Activated CD4-positive, alpha-beta T cell treated with anti-CD3 and anti-CD28 coated beads for 36 hours (primary cell): ENCODE measurements at regions of chr18 and their contacts with region 1.

Region 1: GRCh38 chr18:59837586-59837985 is 62.2 kb upstream of the PMAIP1 start:
- DNase-seq: peak; percentile 56
- ATAC-seq: peak; percentile 60
- H3K4me3 Mint-ChIP-seq: no peak overlapping the region
- H3K27ac Mint-ChIP-seq: no peak overlapping the region
- H3K4me1 Mint-ChIP-seq: peaks cover 10% of the 10 kb centered on the region
- H3K27me3 Mint-ChIP-seq: peaks cover 5% of the 10 kb centered on the region

Region 2: GRCh38 chr18:58231930-58232329 is 1605.7 kb before region 1 on chr18:
- CTCF ChIA-PET with region 1: no interaction called
- POLR2A ChIA-PET with region 1: no interaction called
- intact Hi-C with region 1: no loop called
- DNase-seq: no peak
- ATAC-seq: no peak
- H3K4me3 Mint-ChIP-seq: no peak overlapping the region
- H3K27ac Mint-ChIP-seq: no peak overlapping the region
- H3K4me1 Mint-ChIP-seq: no peaks in the 10 kb centered on the region
- H3K27me3 Mint-ChIP-seq: no peaks in the 10 kb centered on the region

Region 3: DNA sequence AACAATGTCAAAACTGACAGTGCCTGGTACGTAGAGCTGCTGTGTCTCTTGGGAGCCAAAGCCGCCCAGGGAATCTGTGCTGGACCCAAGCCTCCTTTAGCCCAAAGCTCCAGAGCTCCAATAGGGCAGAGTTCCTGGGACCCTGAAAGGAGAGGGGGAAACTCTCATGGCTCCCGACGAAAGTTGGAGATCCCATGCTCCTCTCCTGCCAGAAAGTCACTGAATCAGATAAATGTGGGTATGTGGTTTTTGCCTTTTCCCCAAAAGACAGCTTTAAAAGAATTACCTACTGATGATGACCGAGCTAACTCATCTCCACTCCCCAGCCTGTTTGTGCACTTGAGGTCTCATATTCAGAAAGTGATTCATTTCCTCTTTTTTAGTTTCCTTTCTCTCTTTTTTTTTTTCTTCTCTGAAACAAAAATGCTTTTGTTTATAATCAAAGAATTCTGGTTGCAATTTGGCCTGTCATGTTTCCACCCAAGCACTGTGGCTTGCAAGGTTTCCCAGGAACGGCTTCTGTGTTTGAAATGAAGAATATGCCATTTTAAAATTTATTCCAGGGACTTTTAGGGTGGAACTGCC is 48.1 kb after region 1 on chr18:
- CTCF ChIA-PET with region 1: interaction called, 3 read pairs
- POLR2A ChIA-PET with region 1: interaction called, 5 read pairs
- intact Hi-C with region 1: loop called in 1 of 2 experiments (anchors 5 kb)
- DNase-seq: peak; percentile 56
- ATAC-seq: peak; percentile 79
- H3K4me3 Mint-ChIP-seq: peak overlapping the region; percentile 26
- H3K27ac Mint-ChIP-seq: peak overlapping the region; percentile 74
- H3K4me1 Mint-ChIP-seq: peaks cover 39% of the 10 kb centered on the region
- H3K27me3 Mint-ChIP-seq: no peaks in the 10 kb centered on the region

Region 4: DNA sequence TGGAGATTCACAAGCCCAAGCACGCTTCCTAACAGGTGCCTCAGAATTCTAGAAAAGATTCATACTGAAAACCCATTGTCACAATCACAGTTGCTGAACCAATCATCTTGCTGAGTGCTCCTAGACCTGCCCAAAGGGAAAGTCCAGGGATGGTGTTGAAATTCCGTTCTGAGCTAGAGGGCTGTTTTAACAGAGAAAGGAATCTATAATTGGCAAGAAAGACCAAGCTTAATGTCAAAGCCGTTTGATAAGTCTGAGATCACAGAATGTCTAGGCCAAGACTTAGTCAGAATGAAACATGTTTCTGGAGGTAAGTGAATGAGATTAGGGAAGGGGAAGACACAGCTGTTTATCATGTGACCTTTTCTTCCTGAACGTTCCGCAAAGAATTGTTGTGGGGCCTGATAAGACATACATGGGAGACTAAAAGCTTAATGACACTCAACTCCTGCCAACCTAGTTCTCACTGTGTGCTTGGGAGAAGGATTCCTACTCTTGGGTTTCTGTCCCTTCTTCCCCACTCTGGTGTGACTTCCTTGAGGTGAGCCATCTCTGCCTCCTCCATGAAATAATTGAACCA is 89.8 kb after region 1 on chr18:
- CTCF ChIA-PET with region 1: interaction called, 3 read pairs
- POLR2A ChIA-PET with region 1: no interaction called
- intact Hi-C with region 1: loop called in 1 of 2 experiments (anchors 1 kb)
- DNase-seq: peak; percentile 70
- ATAC-seq: peak; percentile 90
- H3K4me3 Mint-ChIP-seq: peak overlapping the region; percentile 47
- H3K27ac Mint-ChIP-seq: peak overlapping the region; percentile 93
- H3K4me1 Mint-ChIP-seq: peaks cover 37% of the 10 kb centered on the region
- H3K27me3 Mint-ChIP-seq: no peaks in the 10 kb centered on the region

Region 5: GRCh38 chr18:59950215-59950944 is 112.8 kb after region 1 on chr18:
- CTCF ChIA-PET with region 1: no interaction called
- POLR2A ChIA-PET with region 1: interaction called, 3 read pairs
- intact Hi-C with region 1: loop called in 1 of 2 experiments (anchors 5 kb)
- DNase-seq: peak; percentile 18
- ATAC-seq: peak; percentile 61
- H3K4me3 Mint-ChIP-seq: no peak overlapping the region
- H3K27ac Mint-ChIP-seq: no peak overlapping the region
- H3K4me1 Mint-ChIP-seq: peaks cover 38% of the 10 kb centered on the region
- H3K27me3 Mint-ChIP-seq: peaks cover 2% of the 10 kb centered on the region

Region 6: DNA sequence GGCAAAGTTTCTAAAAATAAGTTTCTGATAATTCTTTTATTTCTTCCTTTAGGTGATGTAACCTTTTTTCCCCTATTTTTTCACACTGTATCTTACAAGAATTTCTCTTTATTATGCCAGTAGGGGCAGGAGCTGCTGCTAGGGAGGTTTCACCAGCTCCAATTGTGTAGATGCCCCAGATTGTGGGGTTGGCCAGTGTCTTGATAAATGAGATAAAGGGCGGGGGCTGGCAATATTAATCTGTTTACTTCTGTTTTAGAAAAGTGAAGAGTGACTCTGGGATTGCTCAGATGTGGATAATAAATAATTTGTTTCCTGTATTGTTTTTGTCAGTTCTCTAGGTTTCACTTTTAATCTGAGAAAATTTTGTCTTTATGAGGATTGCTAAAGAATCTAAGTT is 344.6 kb after region 1 on chr18:
- CTCF ChIA-PET with region 1: no interaction called
- POLR2A ChIA-PET with region 1: no interaction called
- intact Hi-C with region 1: no loop called
- DNase-seq: no peak
- ATAC-seq: no peak
- H3K4me3 Mint-ChIP-seq: no peak overlapping the region
- H3K27ac Mint-ChIP-seq: no peak overlapping the region
- H3K4me1 Mint-ChIP-seq: no peaks in the 10 kb centered on the region
- H3K27me3 Mint-ChIP-seq: no peaks in the 10 kb centered on the region

Region 7: GRCh38 chr18:60554967-60555366 is 717.4 kb after region 1 on chr18:
- CTCF ChIA-PET with region 1: no interaction called
- POLR2A ChIA-PET with region 1: no interaction called
- intact Hi-C with region 1: loop called in 1 of 2 experiments (anchors 5 kb)
- DNase-seq: no peak
- ATAC-seq: no peak
- H3K4me3 Mint-ChIP-seq: no peak overlapping the region
- H3K27ac Mint-ChIP-seq: no peak overlapping the region
- H3K4me1 Mint-ChIP-seq: no peaks in the 10 kb centered on the region
- H3K27me3 Mint-ChIP-seq: no peaks in the 10 kb centered on the region